ENCODE measurements at regions of chr18 and their contacts with region 1.

Region 1: GRCh38 chr18:11089931-11090715 is 59.2 kb downstream of the PIEZO2 start:
- DNase-seq: no peak
- ATAC-seq: no peak
- H3K4me3 ChIP-seq: no peak overlapping the region
- H3K27ac ChIP-seq: no peak overlapping the region
- H3K4me1 ChIP-seq: no peaks in the 10 kb centered on the region; the same call in 1 of the 2 replicates
- H3K27me3 ChIP-seq: no peaks in the 10 kb centered on the region
- CTCF ChIP-seq: no peak
- POLR2A ChIP-seq: no peak
- RAD21 ChIP-seq: no peak

Region 2: GRCh38 chr18:10841203-10841602 is 248.9 kb before region 1 on chr18:
- CTCF ChIA-PET with region 1: no interaction called
- POLR2A ChIA-PET with region 1: no interaction called
- dilution Hi-C with region 1: no loop called
- in situ Hi-C with region 1: no loop called
- intact Hi-C with region 1: no loop called
- DNase-seq: no peak
- ATAC-seq: no peak
- H3K4me3 ChIP-seq: no peak overlapping the region
- H3K27ac ChIP-seq: no peak overlapping the region; the same call in 1 of the 2 replicates
- H3K4me1 ChIP-seq: peaks cover 1% of the 10 kb centered on the region; the same call in 1 of the 2 replicates
- H3K27me3 ChIP-seq: no peaks in the 10 kb centered on the region
- CTCF ChIP-seq: no peak
- POLR2A ChIP-seq: no peak
- RAD21 ChIP-seq: no peak

Region 3: GRCh38 chr18:11052800-11053199 is 37.3 kb before region 1 on chr18:
- CTCF ChIA-PET with region 1: interaction called, 6 read pairs
- POLR2A ChIA-PET with region 1: interaction called, 10 read pairs
- dilution Hi-C with region 1: no loop called
- in situ Hi-C with region 1: no loop called
- intact Hi-C with region 1: no loop called
- DNase-seq: peak; percentile 81
- ATAC-seq: no peak
- H3K4me3 ChIP-seq: no peak overlapping the region
- H3K27ac ChIP-seq: no peak overlapping the region
- H3K4me1 ChIP-seq: peaks cover 4% of the 10 kb centered on the region; the same call in 1 of the 2 replicates
- H3K27me3 ChIP-seq: no peaks in the 10 kb centered on the region
- CTCF ChIP-seq: no peak
- POLR2A ChIP-seq: no peak
- RAD21 ChIP-seq: no peak

Region 4: GRCh38 chr18:11500153-11501122 is 410.3 kb after region 1 on chr18:
- CTCF ChIA-PET with region 1: no interaction called
- POLR2A ChIA-PET with region 1: no interaction called
- dilution Hi-C with region 1: no loop called
- in situ Hi-C with region 1: no loop called
- intact Hi-C with region 1: no loop called
- DNase-seq: peak; percentile 98
- ATAC-seq: peak; percentile 97
- H3K4me3 ChIP-seq: no peak overlapping the region
- H3K27ac ChIP-seq: no peak overlapping the region
- H3K4me1 ChIP-seq: peaks cover 2% of the 10 kb centered on the region; the same call in 1 of the 2 replicates
- H3K27me3 ChIP-seq: no peaks in the 10 kb centered on the region
- CTCF ChIP-seq: no peak
- POLR2A ChIP-seq: no peak
- RAD21 ChIP-seq: no peak

Measured in IMR-90 (cell line).